ENCODE measurements at regions of chr7 and their contacts with region 1.

Region 1: GRCh38 chr7:34321000-34321581 is 336.9 kb upstream of the NPSR1 start:
- DNase-seq: peak; percentile 51
- ATAC-seq: peak; percentile 85 to 87

Region 2: GRCh38 chr7:34425187-34425586 is 104.1 kb after region 1 on chr7:
- intact Hi-C with region 1: loop called (anchors 5 to 10 kb)
- DNase-seq: no peak
- ATAC-seq: no peak

Region 3: DNA sequence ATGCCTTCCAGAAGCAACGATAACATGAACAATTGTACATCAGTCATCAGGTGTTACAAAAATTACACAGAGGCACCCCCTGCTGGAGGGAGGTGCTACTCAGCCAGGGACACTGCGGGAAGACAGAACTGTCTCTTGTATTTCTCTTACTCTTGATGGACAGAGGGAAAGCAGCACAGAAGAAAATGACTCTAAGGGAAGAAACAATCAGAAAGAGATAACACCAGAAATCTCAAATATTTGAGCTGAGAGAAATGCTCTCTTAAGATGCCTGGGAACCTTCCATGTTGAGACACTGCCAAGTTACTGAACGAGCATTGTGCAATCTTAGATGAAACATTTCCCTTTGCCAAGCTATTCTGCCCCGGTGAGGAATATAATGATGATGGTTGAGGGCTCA is 109.4 kb after region 1 on chr7:
- intact Hi-C with region 1: loop called (anchors 5 to 10 kb)
- DNase-seq: no peak
- ATAC-seq: peak in 1 of 2 donors; percentile 83

Region 4: DNA sequence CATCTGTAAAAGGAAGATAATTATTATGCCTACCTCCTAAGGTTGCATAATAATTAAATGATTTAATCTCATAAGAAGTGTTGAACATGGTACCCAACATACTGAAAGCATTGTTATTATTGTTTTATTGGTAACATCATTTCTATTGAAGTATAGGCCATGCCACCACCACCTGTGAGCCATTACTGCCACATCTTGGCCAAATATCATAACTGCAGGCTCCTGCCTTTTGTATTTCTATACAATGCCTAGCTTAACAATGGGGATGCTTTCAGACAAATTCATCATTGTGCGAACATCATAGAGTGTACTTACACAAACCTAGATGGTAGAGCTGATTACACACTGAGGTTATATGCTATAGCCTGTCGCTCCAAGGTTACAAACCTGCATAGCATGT is 275.8 kb after region 1 on chr7:
- intact Hi-C with region 1: loop called in 1 of 2 experiments (anchors 5 kb)
- DNase-seq: no peak
- ATAC-seq: no peak

Measured in left cardiac atrium (tissue), 4 donors.